ENCODE measurements at regions of chr20 and their contacts with region 1.

Region 1: DNA sequence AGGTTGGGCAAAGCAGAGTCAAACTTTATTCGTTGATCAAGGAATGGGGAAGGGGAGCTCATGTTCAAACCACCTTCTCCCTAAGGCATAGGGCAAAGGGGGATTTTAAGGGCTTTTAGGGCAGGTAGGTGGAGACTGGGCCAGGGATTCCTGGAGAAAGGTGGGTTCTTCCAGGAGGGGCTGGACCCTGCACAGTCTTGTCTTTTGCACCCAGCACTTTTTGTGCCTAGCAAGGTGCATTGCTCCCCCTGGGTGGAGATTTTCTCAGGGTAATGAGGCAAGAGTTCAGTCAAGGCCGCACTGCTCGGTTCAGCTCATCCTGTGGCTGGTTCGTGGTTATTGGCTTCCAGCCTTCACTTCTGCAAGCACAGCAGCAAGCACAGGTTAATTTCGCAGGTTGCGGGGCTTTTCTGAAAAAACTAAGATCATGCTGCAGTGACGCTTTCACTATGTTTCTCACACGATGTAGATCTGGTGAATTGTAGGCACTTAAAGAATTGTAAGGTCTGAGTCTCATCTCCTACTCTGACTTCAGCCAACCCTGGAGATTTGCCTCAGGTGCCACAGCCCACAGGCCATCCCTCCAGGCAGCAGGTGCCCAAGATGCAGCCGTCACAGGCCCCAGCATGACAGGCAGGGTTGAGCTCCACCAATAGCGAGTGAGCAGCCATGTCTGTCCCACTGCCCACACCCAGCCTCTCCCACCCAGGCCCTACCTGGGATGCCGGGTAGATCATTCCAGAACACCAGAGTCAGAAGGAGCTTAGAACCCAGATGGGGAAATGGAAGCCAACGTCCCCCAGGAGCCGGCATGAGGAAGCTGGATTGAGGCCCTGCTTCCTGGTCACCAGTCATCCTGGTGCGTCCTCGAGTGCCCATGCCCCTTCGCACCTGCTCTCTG is 37.1 kb downstream of the SUN5 start:
- DNase-seq: peak in 7 of 9 donors; percentile 58 to 81 (median 73)
- ATAC-seq: peak; percentile 68
- H3K4me3 ChIP-seq: peak overlapping the region; percentile 46
- H3K4me3 Mint-ChIP-seq: peak overlapping the region in 7 of 10 donors; percentile 50 to 82 (median 74)
- H3K27ac ChIP-seq: peak overlapping the region; percentile 85
- H3K27ac Mint-ChIP-seq: peak overlapping the region in 3 of 9 donors; percentile 90 to 98 (median 94)
- H3K4me1 ChIP-seq: peaks cover 72 to 86% of the 10 kb centered on the region in 2 donors
- H3K4me1 Mint-ChIP-seq: peaks cover 20 to 87% (median 64%) of the 10 kb centered on the region in 7 donors
- H3K27me3 ChIP-seq: no peaks in the 10 kb centered on the region
- H3K27me3 Mint-ChIP-seq: no peaks in the 10 kb centered on the region

Region 2: GRCh38 chr20:32934580-32934979 is 32.6 kb before region 1 on chr20:
- CTCF ChIA-PET with region 1: no interaction called
- POLR2A ChIA-PET with region 1: no interaction called
- intact Hi-C with region 1: no loop called
- DNase-seq: no peak
- ATAC-seq: no peak
- H3K4me3 ChIP-seq: no peak overlapping the region
- H3K4me3 Mint-ChIP-seq: no peak overlapping the region
- H3K27ac ChIP-seq: no peak overlapping the region
- H3K27ac Mint-ChIP-seq: peak overlapping the region in 1 of 9 donors; percentile 72
- H3K4me1 ChIP-seq: no peaks in the 10 kb centered on the region
- H3K4me1 Mint-ChIP-seq: peaks cover 0 to 2% (median 0%) of the 10 kb centered on the region in 7 donors
- H3K27me3 ChIP-seq: no peaks in the 10 kb centered on the region
- H3K27me3 Mint-ChIP-seq: peaks cover 0 to 4% (median 0%) of the 10 kb centered on the region in 5 donors

Region 3: DNA sequence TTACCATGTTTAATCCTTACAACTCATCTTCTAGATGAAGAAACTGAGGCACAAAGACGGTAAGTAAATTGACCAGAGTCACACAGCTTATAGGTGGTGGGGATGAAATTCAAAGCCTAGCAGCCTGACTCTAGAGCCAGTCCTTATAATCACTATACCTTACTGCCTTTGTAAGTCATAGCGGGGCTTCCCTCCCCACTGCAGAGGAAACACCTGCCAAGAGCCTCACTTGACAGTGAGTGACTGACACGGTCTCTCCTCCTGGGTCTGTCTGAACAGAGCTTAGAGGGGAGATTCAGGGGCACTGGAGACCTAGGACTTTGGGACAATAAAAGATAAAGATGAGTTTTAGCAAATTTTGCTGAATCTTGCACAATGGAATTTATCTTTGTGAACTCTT is 24.3 kb after region 1 on chr20:
- CTCF ChIA-PET with region 1: interaction called, 3 read pairs
- POLR2A ChIA-PET with region 1: interaction called, 61 read pairs
- intact Hi-C with region 1: loop called in 1 of 2 experiments (anchors 2 kb)
- DNase-seq: peak in 3 of 9 donors; percentile 16 to 34 (median 18)
- ATAC-seq: no peak
- H3K4me3 ChIP-seq: no peak overlapping the region
- H3K4me3 Mint-ChIP-seq: peak overlapping the region in 7 of 10 donors; percentile 27 to 68 (median 54)
- H3K27ac ChIP-seq: no peak overlapping the region
- H3K27ac Mint-ChIP-seq: peak overlapping the region in 7 of 9 donors; percentile 26 to 86 (median 54)
- H3K4me1 ChIP-seq: peaks cover 0 to 33% of the 10 kb centered on the region in 2 donors
- H3K4me1 Mint-ChIP-seq: peaks cover 6 to 54% (median 44%) of the 10 kb centered on the region in 7 donors
- H3K27me3 ChIP-seq: no peaks in the 10 kb centered on the region
- H3K27me3 Mint-ChIP-seq: peaks cover 0 to 2% (median 0%) of the 10 kb centered on the region in 5 donors

Region 4: DNA sequence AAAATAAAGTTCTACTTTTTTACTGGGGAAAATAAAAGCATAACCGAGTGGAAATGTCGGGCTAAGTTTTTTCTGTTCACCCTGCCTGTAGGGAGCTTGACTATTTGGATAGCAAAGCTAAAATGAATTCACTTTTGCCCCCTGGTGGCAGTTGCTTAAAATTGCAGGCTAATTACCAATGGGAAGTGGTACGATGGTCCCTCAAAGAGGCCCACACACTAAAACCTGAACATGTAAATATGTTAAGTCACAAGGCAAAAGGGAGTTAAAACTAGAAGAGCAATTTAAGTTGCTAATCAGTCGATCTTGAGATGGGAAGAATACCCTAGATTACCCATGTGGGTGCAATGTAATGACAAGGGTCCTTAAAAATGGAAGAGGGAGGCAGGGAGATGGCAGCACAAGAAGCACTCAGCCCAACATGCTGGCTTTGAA is 38.0 kb after region 1 on chr20:
- CTCF ChIA-PET with region 1: interaction called, 19 read pairs
- POLR2A ChIA-PET with region 1: interaction called, 3 read pairs
- intact Hi-C with region 1: loop called in 1 of 2 experiments (anchors 1 kb)
- DNase-seq: peak in 6 of 9 donors; percentile 7 to 41 (median 35)
- ATAC-seq: no peak
- H3K4me3 ChIP-seq: no peak overlapping the region
- H3K4me3 Mint-ChIP-seq: peak overlapping the region in 1 of 10 donors; percentile 38
- H3K27ac ChIP-seq: no peak overlapping the region
- H3K27ac Mint-ChIP-seq: peak overlapping the region in 2 of 9 donors; percentile 42 to 63
- H3K4me1 ChIP-seq: peaks cover 0 to 20% of the 10 kb centered on the region in 2 donors
- H3K4me1 Mint-ChIP-seq: peaks cover 3 to 56% (median 34%) of the 10 kb centered on the region in 7 donors
- H3K27me3 ChIP-seq: no peaks in the 10 kb centered on the region
- H3K27me3 Mint-ChIP-seq: no peaks in the 10 kb centered on the region

Measured in naive thymus-derived CD4-positive, alpha-beta T cell (primary cell).